ENCODE measurements at regions of chr7 and their contacts with region 1.

Region 1: DNA sequence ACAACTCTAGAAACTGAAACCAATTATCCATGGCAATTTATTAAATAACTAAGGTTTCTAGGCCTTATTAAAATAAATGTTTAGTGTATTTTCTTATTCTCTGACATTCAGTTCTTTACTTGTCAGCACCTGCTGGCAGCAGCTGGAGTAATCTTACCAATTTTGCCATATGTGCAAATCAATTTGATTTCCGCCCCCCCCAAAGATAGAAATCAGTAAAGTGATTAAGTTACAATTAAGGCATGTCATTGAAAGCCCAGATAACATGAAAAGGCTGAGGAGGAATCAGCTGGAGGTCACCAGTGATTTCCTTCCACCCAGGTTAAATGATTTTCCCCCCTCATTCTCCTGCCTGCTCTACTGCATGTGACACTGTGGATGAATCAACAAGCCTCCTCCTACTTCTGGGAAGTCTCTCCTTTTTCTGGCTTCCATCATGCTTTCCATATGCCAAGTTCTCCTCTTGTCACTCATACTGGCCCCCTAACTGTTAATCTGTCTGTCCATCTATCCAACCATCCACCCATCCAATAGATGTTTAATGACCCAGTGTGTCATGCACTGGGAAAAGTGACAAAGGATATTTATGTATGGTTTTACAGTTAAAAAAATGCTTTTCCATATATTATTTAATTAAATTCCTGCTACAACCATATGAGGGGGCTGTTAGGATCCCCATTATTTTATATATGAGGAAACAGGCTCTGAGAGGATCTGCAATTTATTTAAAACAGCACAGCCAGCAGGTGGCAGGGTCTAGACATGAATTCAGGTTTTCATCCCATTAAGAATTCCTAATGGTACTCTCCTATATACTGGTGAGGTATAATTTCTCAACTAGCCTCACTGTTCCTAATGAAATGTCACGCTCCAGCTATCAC is 116.5 kb downstream of the ATXN7L1 start:
- DNase-seq: peak; percentile 50 to 56
- H3K4me3 ChIP-seq: no peak overlapping the region
- H3K4me3 Mint-ChIP-seq: no peak overlapping the region
- H3K27ac Mint-ChIP-seq: no peak overlapping the region
- H3K4me1 ChIP-seq: no peaks in the 10 kb centered on the region
- H3K4me1 Mint-ChIP-seq: no peaks in the 10 kb centered on the region
- H3K27me3 ChIP-seq: no peaks in the 10 kb centered on the region
- H3K27me3 Mint-ChIP-seq: no peaks in the 10 kb centered on the region
- CTCF ChIP-seq: peak in 1 of 2 experiments; percentile 53

Region 2: GRCh38 chr7:105652359-105652993 is 107.4 kb before region 1 on chr7:
- CTCF ChIA-PET with region 1: interaction called, 4 read pairs
- POLR2A ChIA-PET with region 1: no interaction called
- intact Hi-C with region 1: loop called (anchors 5 kb)
- DNase-seq: peak; percentile 81 to 87
- H3K4me3 ChIP-seq: no peak overlapping the region
- H3K4me3 Mint-ChIP-seq: no peak overlapping the region
- H3K27ac Mint-ChIP-seq: no peak overlapping the region
- H3K4me1 ChIP-seq: peaks cover 20% of the 10 kb centered on the region
- H3K4me1 Mint-ChIP-seq: peaks cover 27% of the 10 kb centered on the region
- H3K27me3 ChIP-seq: no peaks in the 10 kb centered on the region
- H3K27me3 Mint-ChIP-seq: no peaks in the 10 kb centered on the region
- CTCF ChIP-seq: peak; percentile 91 to 93

Region 3: GRCh38 chr7:105866102-105866801 is 106.3 kb after region 1 on chr7:
- CTCF ChIA-PET with region 1: no interaction called
- POLR2A ChIA-PET with region 1: interaction called, 10 read pairs
- intact Hi-C with region 1: no loop called
- DNase-seq: no peak
- H3K4me3 ChIP-seq: no peak overlapping the region
- H3K4me3 Mint-ChIP-seq: no peak overlapping the region
- H3K27ac Mint-ChIP-seq: no peak overlapping the region
- H3K4me1 ChIP-seq: no peaks in the 10 kb centered on the region
- H3K4me1 Mint-ChIP-seq: no peaks in the 10 kb centered on the region
- H3K27me3 ChIP-seq: no peaks in the 10 kb centered on the region
- H3K27me3 Mint-ChIP-seq: no peaks in the 10 kb centered on the region
- CTCF ChIP-seq: no peak

Region 4: GRCh38 chr7:105934572-105935185 is 174.8 kb after region 1 on chr7:
- CTCF ChIA-PET with region 1: interaction called, 3 read pairs
- POLR2A ChIA-PET with region 1: no interaction called
- intact Hi-C with region 1: loop called (anchors 1 kb)
- DNase-seq: peak; percentile 50 to 59
- H3K4me3 ChIP-seq: no peak overlapping the region
- H3K4me3 Mint-ChIP-seq: no peak overlapping the region
- H3K27ac Mint-ChIP-seq: no peak overlapping the region
- H3K4me1 ChIP-seq: no peaks in the 10 kb centered on the region
- H3K4me1 Mint-ChIP-seq: peaks cover 1% of the 10 kb centered on the region
- H3K27me3 ChIP-seq: no peaks in the 10 kb centered on the region
- H3K27me3 Mint-ChIP-seq: no peaks in the 10 kb centered on the region
- CTCF ChIP-seq: peak; percentile 38 to 68

Region 5: DNA sequence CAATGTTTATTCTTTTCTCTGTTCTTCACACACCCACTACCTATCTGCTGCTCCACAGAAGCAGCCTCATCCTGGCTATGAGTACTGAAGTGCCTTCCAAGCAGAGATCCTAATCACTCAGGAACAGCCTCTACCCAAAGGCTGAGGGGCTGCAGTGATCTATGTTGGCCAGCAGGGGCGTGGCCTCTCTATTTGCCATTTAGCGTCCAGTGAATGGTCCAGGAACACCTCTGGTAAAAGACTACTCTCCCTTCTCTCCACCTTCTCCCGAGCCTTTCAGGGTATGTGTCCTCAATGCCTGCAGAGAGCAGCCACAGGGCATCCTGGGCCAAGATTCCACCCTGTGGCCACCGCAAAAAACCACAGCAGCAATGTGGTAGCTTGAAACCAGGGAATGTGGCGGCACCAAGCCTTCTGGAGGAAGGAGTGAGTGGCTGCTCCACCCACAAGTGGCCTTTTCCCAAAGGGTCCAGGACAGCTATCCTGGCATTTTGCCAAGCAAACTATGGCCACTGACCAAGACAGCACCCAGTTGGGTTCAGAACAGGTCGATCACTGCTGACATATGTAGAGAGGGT is 281.3 kb after region 1 on chr7:
- CTCF ChIA-PET with region 1: interaction called, 6 read pairs
- POLR2A ChIA-PET with region 1: no interaction called
- intact Hi-C with region 1: loop called (anchors 1 kb)
- DNase-seq: peak; percentile 56 to 61
- H3K4me3 ChIP-seq: no peak overlapping the region
- H3K4me3 Mint-ChIP-seq: no peak overlapping the region
- H3K27ac Mint-ChIP-seq: no peak overlapping the region
- H3K4me1 ChIP-seq: no peaks in the 10 kb centered on the region
- H3K4me1 Mint-ChIP-seq: peaks cover 6% of the 10 kb centered on the region
- H3K27me3 ChIP-seq: no peaks in the 10 kb centered on the region
- H3K27me3 Mint-ChIP-seq: peaks cover 9% of the 10 kb centered on the region
- CTCF ChIP-seq: peak; percentile 79 to 87

Measured in Caco-2 (cell line).